ENCODE measurements at regions of chr10 and their contacts with region 1.

Region 1: GRCh38 chr10:130190055-130190736 is 54.0 kb downstream of the GLRX3 start:
- DNase-seq: peak; percentile 75
- ATAC-seq: peak; percentile 96
- H3K4me3 ChIP-seq: peak overlapping the region; percentile 61
- H3K27ac ChIP-seq: no peak overlapping the region; the same call in 1 of the 2 replicates
- H3K4me1 ChIP-seq: 0 out of 2 replicates have a peak, but pooled peaks cover 1% of the 10 kb centered on the region
- H3K27me3 ChIP-seq: no peaks in the 10 kb centered on the region
- CTCF ChIP-seq: peak; percentile 100; the same call in 1 of the 2 replicates
- POLR2A ChIP-seq: no peak
- RAD21 ChIP-seq: peak; percentile 92

Region 2: DNA sequence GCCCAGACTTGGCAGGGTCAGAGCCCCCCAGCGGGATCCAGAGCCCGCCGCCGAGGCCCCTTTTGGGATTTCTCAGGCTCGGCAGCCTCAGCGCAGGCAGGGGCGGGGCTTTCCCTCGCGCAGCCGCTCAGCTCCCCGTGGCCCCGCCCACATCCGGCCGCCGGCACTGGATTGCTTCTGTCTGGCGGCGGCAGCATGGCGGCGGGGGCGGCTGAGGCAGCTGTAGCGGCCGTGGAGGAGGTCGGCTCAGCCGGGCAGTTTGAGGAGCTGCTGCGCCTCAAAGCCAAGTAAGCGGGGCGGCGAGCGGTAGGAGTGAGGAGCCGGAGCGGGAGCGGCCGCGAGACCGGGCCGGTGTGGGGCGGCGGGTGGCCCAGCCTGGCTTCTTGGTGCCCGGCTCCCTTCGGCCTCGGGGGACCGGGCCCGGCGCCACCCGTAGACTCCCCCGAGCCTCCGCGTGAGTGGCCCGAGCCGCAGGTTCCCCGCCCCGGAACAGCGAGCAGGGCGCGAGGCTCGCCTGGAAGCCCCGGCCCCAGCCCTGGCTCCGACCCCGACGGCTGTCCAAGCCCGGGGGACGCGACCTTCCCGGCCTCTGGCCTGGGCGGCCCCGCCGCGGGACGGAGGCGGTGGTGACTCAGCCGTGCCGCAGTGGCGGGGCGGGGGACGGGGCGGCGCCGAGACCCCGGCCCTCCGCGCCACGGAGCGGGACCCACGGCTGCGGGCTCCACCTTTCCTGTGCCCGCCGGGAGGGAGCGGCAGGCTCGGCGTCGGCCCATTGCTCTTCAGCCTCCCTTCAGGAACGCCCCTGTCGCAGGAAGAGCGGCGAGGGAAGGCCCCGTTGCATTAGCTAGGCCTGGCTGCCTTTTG is 53.7 kb before region 1 on chr10 and contains the start of gene GLRX3:
- CTCF ChIA-PET with region 1: no interaction called
- POLR2A ChIA-PET with region 1: no interaction called
- dilution Hi-C with region 1: no loop called
- in situ Hi-C with region 1: no loop called
- intact Hi-C with region 1: no loop called
- DNase-seq: peak; percentile 71
- ATAC-seq: peak; percentile 96
- H3K4me3 ChIP-seq: peak within 1 kb of the TSS; percentile 80
- H3K27ac ChIP-seq: peak within 1 kb of the TSS; percentile 86
- H3K4me1 ChIP-seq: peaks cover 13% of the 10 kb centered on the region
- H3K27me3 ChIP-seq: no peaks in the 10 kb centered on the region
- CTCF ChIP-seq: no peak
- POLR2A ChIP-seq: peak; percentile 81
- RAD21 ChIP-seq: no peak
- total RNA-seq, gene GLRX3: 78.7 and 96.7 TPM in 2 replicates

Region 3: GRCh38 chr10:131874991-131875451 is 1684.8 kb after region 1 on chr10:
- CTCF ChIA-PET with region 1: interaction called, 4 read pairs
- POLR2A ChIA-PET with region 1: no interaction called
- dilution Hi-C with region 1: no loop called
- in situ Hi-C with region 1: loop called (anchors 5 kb)
- intact Hi-C with region 1: loop called (anchors 1 kb)
- DNase-seq: peak; percentile 72
- ATAC-seq: peak; percentile 99
- H3K4me3 ChIP-seq: no peak overlapping the region
- H3K27ac ChIP-seq: no peak overlapping the region
- H3K4me1 ChIP-seq: no peaks in the 10 kb centered on the region
- H3K27me3 ChIP-seq: peaks cover 7% of the 10 kb centered on the region; the same call in 1 of the 2 replicates
- CTCF ChIP-seq: peak; percentile 87
- POLR2A ChIP-seq: no peak
- RAD21 ChIP-seq: peak; percentile 85

Measured in IMR-90 (cell line).